IMR-90 (cell line): ENCODE measurements at regions of chr17 and their contacts with region 1.

Region 1: GRCh38 chr17:40340880-40341807 is 23.4 kb downstream of the GJD3 start:
- DNase-seq: peak; percentile 73
- ATAC-seq: peak; percentile 45
- H3K4me3 ChIP-seq: peak overlapping the region; percentile 82
- H3K27ac ChIP-seq: peak overlapping the region; percentile 73
- H3K4me1 ChIP-seq: peaks cover 26% of the 10 kb centered on the region
- H3K27me3 ChIP-seq: no peaks in the 10 kb centered on the region
- CTCF ChIP-seq: no peak
- POLR2A ChIP-seq: peak; percentile 79; the same call in 1 of the 2 replicates
- RAD21 ChIP-seq: peak; percentile 27

Region 2: DNA sequence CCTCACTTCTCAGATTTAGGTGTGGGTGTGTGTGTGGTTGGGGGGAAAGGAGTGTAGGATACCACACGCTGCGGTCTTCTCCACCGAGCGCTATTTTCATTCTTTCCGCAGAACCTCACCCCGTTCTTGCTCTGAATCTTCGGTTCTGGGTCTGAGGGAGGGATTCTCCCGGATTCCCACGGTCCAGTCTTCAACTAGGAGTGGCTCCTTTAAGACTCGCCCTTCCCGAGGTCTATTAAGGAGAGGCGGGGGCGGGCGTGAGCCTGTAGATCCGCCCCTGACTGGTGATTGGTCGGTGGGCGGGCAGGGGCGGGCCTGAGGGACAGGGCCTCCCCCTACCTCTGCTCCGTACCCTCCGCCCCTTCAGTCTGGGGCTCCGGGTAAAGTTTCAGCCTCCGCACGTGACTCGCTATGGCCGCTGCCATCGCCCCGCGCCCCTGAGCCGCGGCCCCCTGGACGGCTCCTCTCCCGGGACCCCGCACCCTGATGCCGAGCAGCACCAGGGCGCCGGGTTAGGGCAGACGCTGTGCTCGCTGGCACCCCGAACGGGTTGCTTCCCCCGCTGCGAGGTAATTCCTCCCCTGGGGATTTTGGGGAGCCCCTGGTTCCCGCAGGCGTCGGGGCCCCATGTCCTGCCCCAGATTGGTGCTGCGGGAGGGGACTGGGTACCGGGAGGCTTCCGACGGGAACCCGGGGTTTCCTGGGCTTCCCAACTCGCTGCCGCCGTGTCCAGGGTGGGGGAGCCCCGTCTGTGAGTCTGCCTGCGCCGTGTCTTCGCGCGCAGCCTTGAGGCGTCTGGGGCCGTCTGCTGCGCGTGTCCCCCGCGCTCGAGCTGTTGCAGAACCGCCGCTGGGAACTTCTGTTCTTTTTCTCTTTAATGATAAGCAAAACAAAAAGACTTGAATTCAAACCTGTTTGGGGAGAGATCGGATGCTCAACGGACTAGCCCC is 23.0 kb before region 1 on chr17:
- CTCF ChIA-PET with region 1: interaction called, 6 read pairs
- POLR2A ChIA-PET with region 1: no interaction called
- dilution Hi-C with region 1: no loop called
- in situ Hi-C with region 1: no loop called
- intact Hi-C with region 1: loop called (anchors 2 kb)
- DNase-seq: peak; percentile 94
- ATAC-seq: peak; percentile 91
- H3K4me3 ChIP-seq: peak overlapping the region; percentile 73
- H3K27ac ChIP-seq: peak overlapping the region; percentile 83
- H3K4me1 ChIP-seq: peaks cover 67% of the 10 kb centered on the region
- H3K27me3 ChIP-seq: no peaks in the 10 kb centered on the region
- CTCF ChIP-seq: no peak
- POLR2A ChIP-seq: peak; percentile 86
- RAD21 ChIP-seq: no peak